Gastrocnemius medialis (tissue), 4 donors: ENCODE measurements at regions of chr1 and their contacts with region 1.

Region 1: GRCh38 chr1:28581536-28582247 is 10.4 kb upstream of the RAB42 start:
- DNase-seq: peak; percentile 95
- ATAC-seq: peak; percentile 92 to 96
- H3K4me3 ChIP-seq: peak overlapping the region; percentile 76 to 95 (median 88)
- H3K27ac ChIP-seq: peak overlapping the region; percentile 89 to 94 (median 91)
- H3K4me1 ChIP-seq: peaks cover 23 to 25% of the 10 kb centered on the region in 2 donors
- H3K27me3 ChIP-seq: no peaks in the 10 kb centered on the region
- CTCF ChIP-seq: peak in 4 of 5 experiments; percentile 22 to 42 (median 30)
- POLR2A ChIP-seq: peak; percentile 96 to 99

Region 2: GRCh38 chr1:28369371-28370238 is 212.1 kb before region 1 on chr1 and contains the start of gene PHACTR4:
- in situ Hi-C with region 1: loop called in 1 of 4 experiments (anchors 25 kb)
- intact Hi-C with region 1: no loop called
- DNase-seq: peak; percentile 87 to 93
- ATAC-seq: peak; percentile 95 to 97
- H3K4me3 ChIP-seq: peak within 1 kb of the TSS; percentile 75 to 92 (median 86)
- H3K27ac ChIP-seq: peak within 1 kb of the TSS; percentile 88 to 95 (median 93)
- H3K4me1 ChIP-seq: peaks cover 9 to 16% of the 10 kb centered on the region in 2 donors
- H3K27me3 ChIP-seq: no peaks in the 10 kb centered on the region
- CTCF ChIP-seq: no peak
- POLR2A ChIP-seq: peak; percentile 88 to 90
- total RNA-seq, gene PHACTR4: 9.1 to 17.7 (median 13.4) TPM

Region 3: GRCh38 chr1:28552758-28553663 is 28.7 kb before region 1 on chr1 and contains the start of gene TRNAU1AP:
- in situ Hi-C with region 1: no loop called
- intact Hi-C with region 1: loop called (anchors 1 kb)
- DNase-seq: peak; percentile 95 to 96
- ATAC-seq: peak; percentile 96
- H3K4me3 ChIP-seq: peak within 1 kb of the TSS; percentile 76 to 81 (median 80)
- H3K27ac ChIP-seq: peak within 1 kb of the TSS; percentile 86 to 93 (median 90)
- H3K4me1 ChIP-seq: peaks cover 8 to 14% of the 10 kb centered on the region in 2 donors
- H3K27me3 ChIP-seq: no peaks in the 10 kb centered on the region
- CTCF ChIP-seq: no peak
- POLR2A ChIP-seq: peak; percentile 80 to 87
- total RNA-seq, gene TRNAU1AP: 5.3 to 19.7 (median 12.0) TPM